CD4-positive, alpha-beta memory T cell (primary cell): ENCODE measurements at regions of chr1 and their contacts with region 1.

Region 1: GRCh38 chr1:182143154-182143657 is 81.7 kb upstream of the ZNF648 start:
- DNase-seq: peak; percentile 73 to 79 (median 79)
- H3K4me3 ChIP-seq: no peak overlapping the region
- H3K4me3 Mint-ChIP-seq: no peak overlapping the region
- H3K27ac ChIP-seq: no peak overlapping the region
- H3K27ac Mint-ChIP-seq: no peak overlapping the region
- H3K4me1 ChIP-seq: no peaks in the 10 kb centered on the region
- H3K4me1 Mint-ChIP-seq: peaks cover 0 to 6% (median 5%) of the 10 kb centered on the region in 4 donors
- H3K27me3 ChIP-seq: no peaks in the 10 kb centered on the region
- H3K27me3 Mint-ChIP-seq: peaks cover 5 to 9% of the 10 kb centered on the region in 2 donors

Region 2: DNA sequence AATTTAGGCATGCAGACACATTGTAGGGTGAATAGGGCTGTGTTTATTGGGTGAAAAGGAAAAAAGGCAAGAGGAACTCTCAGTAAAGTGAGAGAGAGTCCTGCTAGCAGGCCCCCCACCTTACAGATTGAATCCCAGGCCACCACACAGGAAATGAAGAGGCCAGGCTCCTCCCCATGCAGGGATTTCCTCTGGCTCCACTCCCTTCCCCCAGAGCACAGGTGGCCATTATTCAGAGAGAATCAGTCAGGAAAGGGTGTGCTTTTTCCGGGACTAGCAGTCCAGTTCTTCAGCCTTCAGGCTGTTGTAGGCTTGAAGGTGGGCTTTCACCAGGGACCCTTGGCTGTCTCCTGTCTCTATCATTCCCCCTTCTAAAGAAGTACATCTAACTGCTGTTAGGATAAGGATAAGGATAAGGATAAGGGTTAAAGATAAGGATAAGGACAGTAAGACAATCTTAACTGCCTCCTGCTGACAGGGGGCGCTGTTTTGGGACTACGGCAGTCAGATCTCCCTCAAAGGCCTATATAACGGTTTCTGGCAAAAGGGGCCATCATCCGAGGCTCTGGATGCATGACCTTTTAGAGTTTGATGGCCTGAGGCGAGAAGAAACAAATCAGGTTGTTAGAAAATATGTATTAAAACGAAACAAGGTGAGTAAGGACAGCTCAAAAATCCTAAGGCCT is 108.0 kb before region 1 on chr1:
- CTCF ChIA-PET with region 1: no interaction called
- POLR2A ChIA-PET with region 1: no interaction called
- intact Hi-C with region 1: no loop called
- DNase-seq: no peak
- H3K4me3 ChIP-seq: no peak overlapping the region
- H3K4me3 Mint-ChIP-seq: no peak overlapping the region
- H3K27ac ChIP-seq: no peak overlapping the region
- H3K27ac Mint-ChIP-seq: no peak overlapping the region
- H3K4me1 ChIP-seq: peaks cover 1% of the 10 kb centered on the region
- H3K4me1 Mint-ChIP-seq: peaks cover 1 to 5% (median 2%) of the 10 kb centered on the region in 4 donors
- H3K27me3 ChIP-seq: no peaks in the 10 kb centered on the region
- H3K27me3 Mint-ChIP-seq: no peaks in the 10 kb centered on the region

Region 3: GRCh38 chr1:182097516-182097915 is 45.7 kb before region 1 on chr1:
- CTCF ChIA-PET with region 1: interaction called, 4 read pairs
- POLR2A ChIA-PET with region 1: no interaction called
- intact Hi-C with region 1: loop called (anchors 1 kb)
- DNase-seq: no peak
- H3K4me3 ChIP-seq: no peak overlapping the region
- H3K4me3 Mint-ChIP-seq: no peak overlapping the region
- H3K27ac ChIP-seq: no peak overlapping the region
- H3K27ac Mint-ChIP-seq: no peak overlapping the region
- H3K4me1 ChIP-seq: no peaks in the 10 kb centered on the region
- H3K4me1 Mint-ChIP-seq: peaks cover 0 to 2% (median 0%) of the 10 kb centered on the region in 4 donors
- H3K27me3 ChIP-seq: no peaks in the 10 kb centered on the region
- H3K27me3 Mint-ChIP-seq: peaks cover 0 to 5% of the 10 kb centered on the region in 2 donors

Region 4: GRCh38 chr1:182120411-182121239 is 22.6 kb before region 1 on chr1:
- CTCF ChIA-PET with region 1: interaction called, 17 read pairs
- POLR2A ChIA-PET with region 1: no interaction called
- intact Hi-C with region 1: no loop called
- DNase-seq: peak in 1 of 5 donors; percentile 5
- H3K4me3 ChIP-seq: no peak overlapping the region
- H3K4me3 Mint-ChIP-seq: no peak overlapping the region
- H3K27ac ChIP-seq: no peak overlapping the region
- H3K27ac Mint-ChIP-seq: peak overlapping the region in 1 of 7 donors; percentile 63
- H3K4me1 ChIP-seq: no peaks in the 10 kb centered on the region
- H3K4me1 Mint-ChIP-seq: no peaks in the 10 kb centered on the region
- H3K27me3 ChIP-seq: no peaks in the 10 kb centered on the region
- H3K27me3 Mint-ChIP-seq: peaks cover 2 to 11% of the 10 kb centered on the region in 2 donors

Region 5: GRCh38 chr1:182157187-182157586 is 14.0 kb after region 1 on chr1:
- CTCF ChIA-PET with region 1: interaction called, 24 read pairs
- POLR2A ChIA-PET with region 1: no interaction called
- intact Hi-C with region 1: no loop called
- DNase-seq: no peak
- H3K4me3 ChIP-seq: no peak overlapping the region
- H3K4me3 Mint-ChIP-seq: no peak overlapping the region
- H3K27ac ChIP-seq: no peak overlapping the region
- H3K27ac Mint-ChIP-seq: no peak overlapping the region
- H3K4me1 ChIP-seq: no peaks in the 10 kb centered on the region
- H3K4me1 Mint-ChIP-seq: peaks cover 0 to 3% (median 0%) of the 10 kb centered on the region in 4 donors
- H3K27me3 ChIP-seq: no peaks in the 10 kb centered on the region
- H3K27me3 Mint-ChIP-seq: peaks cover 2 to 3% of the 10 kb centered on the region in 2 donors

Region 6: GRCh38 chr1:182391362-182392044 is 248.3 kb after region 1 on chr1 and contains the start of gene GLUL:
- CTCF ChIA-PET with region 1: interaction called, 357 read pairs
- POLR2A ChIA-PET with region 1: interaction called, 18 read pairs
- intact Hi-C with region 1: loop called (anchors 1 kb)
- DNase-seq: peak; percentile 59 to 71 (median 61)
- H3K4me3 ChIP-seq: peak within 1 kb of the TSS; percentile 60 to 83
- H3K4me3 Mint-ChIP-seq: peak within 1 kb of the TSS; percentile 91 to 98 (median 94)
- H3K27ac ChIP-seq: peak within 1 kb of the TSS; percentile 48
- H3K27ac Mint-ChIP-seq: peak within 1 kb of the TSS; percentile 74 to 93 (median 89)
- H3K4me1 ChIP-seq: peaks cover 30% of the 10 kb centered on the region
- H3K4me1 Mint-ChIP-seq: peaks cover 20 to 42% (median 30%) of the 10 kb centered on the region in 4 donors
- H3K27me3 ChIP-seq: no peaks in the 10 kb centered on the region
- H3K27me3 Mint-ChIP-seq: peaks cover 1 to 2% of the 10 kb centered on the region in 2 donors
- total RNA-seq, gene GLUL: 78.5 to 96.0 TPM

Region 7: GRCh38 chr1:182839209-182840065 is 696.2 kb after region 1 on chr1 and contains the start of gene DHX9:
- CTCF ChIA-PET with region 1: no interaction called
- POLR2A ChIA-PET with region 1: no interaction called
- intact Hi-C with region 1: loop called (anchors 5 kb)
- DNase-seq: peak; percentile 95 to 99 (median 96)
- H3K4me3 ChIP-seq: peak within 1 kb of the TSS; percentile 44 to 69
- H3K4me3 Mint-ChIP-seq: peak within 1 kb of the TSS; percentile 88 to 99 (median 96)
- H3K27ac ChIP-seq: peak within 1 kb of the TSS; percentile 81
- H3K27ac Mint-ChIP-seq: peak within 1 kb of the TSS; percentile 89 to 100 (median 98)
- H3K4me1 ChIP-seq: peaks cover 38% of the 10 kb centered on the region
- H3K4me1 Mint-ChIP-seq: peaks cover 34 to 57% (median 42%) of the 10 kb centered on the region in 4 donors
- H3K27me3 ChIP-seq: no peaks in the 10 kb centered on the region
- H3K27me3 Mint-ChIP-seq: no peaks in the 10 kb centered on the region
- total RNA-seq, gene DHX9: 222 TPM